ENCODE measurements at regions of chrX and their contacts with region 1.

Region 1: GRCh38 chrX:136708348-136708747 is 60.4 kb downstream of the CD40LG start:
- DNase-seq: no peak
- H3K4me3 ChIP-seq: no peak overlapping the region
- H3K27ac ChIP-seq: no peak overlapping the region
- H3K4me1 ChIP-seq: no peaks in the 10 kb centered on the region
- H3K27me3 ChIP-seq: no peaks in the 10 kb centered on the region
- CTCF ChIP-seq: peak in 4 of 6 experiments; percentile 17 to 48 (median 34)
- POLR2A ChIP-seq: no peak

Region 2: GRCh38 chrX:136920001-136920400 is 211.7 kb after region 1 on chrX:
- intact Hi-C with region 1: loop called (anchors 10 kb)
- DNase-seq: no peak
- H3K4me3 ChIP-seq: no peak overlapping the region
- H3K27ac ChIP-seq: no peak overlapping the region
- H3K4me1 ChIP-seq: no peaks in the 10 kb centered on the region
- H3K27me3 ChIP-seq: no peaks in the 10 kb centered on the region
- CTCF ChIP-seq: no peak
- POLR2A ChIP-seq: no peak